K562 (cell line): ENCODE measurements at regions of chr4 and their contacts with region 1.

Region 1: GRCh38 chr4:140326395-140326993 is 47.0 kb upstream of the SCOC start:
- DNase-seq: peak; percentile 19 to 48 (median 34)
- ATAC-seq: peak; percentile 83
- H3K4me3 ChIP-seq: no peak overlapping the region
- H3K27ac ChIP-seq: no peak overlapping the region
- H3K4me1 ChIP-seq: peaks cover 0 to 2% of the 10 kb centered on the region in 2 experiments; a peak in 1 of 5 replicates
- H3K27me3 ChIP-seq: no peaks in the 10 kb centered on the region
- CTCF ChIP-seq: peak; percentile 47 to 54 (median 48); a peak in 5 of 6 replicates
- EP300 ChIP-seq: no peak
- POLR2A ChIP-seq: no peak
- RAD21 ChIP-seq: peak; percentile 27 to 42

Region 2: DNA sequence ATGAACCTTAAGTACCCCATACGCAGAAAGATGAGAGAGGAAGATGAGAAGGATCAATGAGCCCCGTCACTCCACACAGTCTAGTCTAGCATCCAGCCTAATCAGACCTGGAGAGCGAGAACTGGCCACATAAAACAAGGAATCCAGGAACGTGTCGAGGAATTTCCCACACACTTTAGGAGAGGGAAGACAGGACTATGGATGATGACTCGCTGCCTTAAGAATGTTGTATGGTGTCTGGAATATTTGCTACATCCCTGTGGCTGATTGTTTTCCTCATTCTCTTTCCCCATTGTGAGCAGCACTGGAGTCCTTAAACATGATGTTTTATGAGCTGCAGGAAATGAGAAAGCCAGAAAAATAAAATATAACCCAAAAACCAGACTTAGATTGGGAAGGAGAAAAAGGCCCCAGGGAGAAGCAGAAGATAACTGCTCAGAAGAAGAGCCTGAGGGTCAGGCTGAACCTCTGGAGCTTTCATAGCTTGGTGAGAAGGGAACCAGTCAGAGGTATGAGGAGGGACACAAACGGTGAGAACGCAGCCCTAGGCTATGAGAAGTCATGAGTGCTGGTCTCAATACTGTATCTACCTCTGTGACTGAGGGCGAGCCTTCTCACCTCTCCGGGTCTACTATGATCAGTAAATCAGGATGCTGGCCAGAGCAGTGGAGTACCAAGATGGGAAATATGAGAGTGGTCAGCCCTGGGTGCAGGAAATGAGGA is 1450.4 kb before region 1 on chr4:
- CTCF ChIA-PET with region 1: no interaction called
- POLR2A ChIA-PET with region 1: no interaction called
- in situ Hi-C with region 1: no loop called
- intact Hi-C with region 1: no loop called
- DNase-seq: no peak
- ATAC-seq: no peak
- H3K4me3 ChIP-seq: no peak overlapping the region
- H3K27ac ChIP-seq: no peak overlapping the region
- H3K4me1 ChIP-seq: no peaks in the 10 kb centered on the region; a peak in 2 of 5 replicates
- H3K27me3 ChIP-seq: peaks cover 27 to 32% of the 10 kb centered on the region in 2 experiments
- CTCF ChIP-seq: no peak
- EP300 ChIP-seq: no peak
- POLR2A ChIP-seq: no peak
- RAD21 ChIP-seq: no peak

Region 3: DNA sequence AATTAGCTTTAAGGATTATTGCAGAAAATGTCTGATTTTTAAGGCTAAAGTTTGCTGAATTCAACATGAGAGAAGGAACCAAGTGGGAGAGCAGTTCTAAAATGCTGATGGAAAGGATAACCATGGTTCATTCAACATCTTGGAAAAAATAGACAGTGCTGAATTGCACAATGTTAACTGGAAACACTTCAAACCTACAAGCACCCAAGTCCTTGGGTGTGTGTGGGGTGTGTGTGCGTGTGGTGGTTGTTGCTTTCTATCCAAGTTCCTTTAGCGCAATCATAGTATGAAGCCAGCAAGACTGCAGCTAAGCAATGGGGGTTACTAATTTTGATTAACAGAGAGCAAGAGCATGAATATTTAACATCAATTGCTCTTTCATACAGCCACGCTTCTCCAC is 17.6 kb after region 1 on chr4:
- CTCF ChIA-PET with region 1: no interaction called
- POLR2A ChIA-PET with region 1: no interaction called
- in situ Hi-C with region 1: no loop called
- intact Hi-C with region 1: loop called (anchors 1 kb)
- DNase-seq: no peak
- ATAC-seq: no peak
- H3K4me3 ChIP-seq: no peak overlapping the region
- H3K27ac ChIP-seq: no peak overlapping the region
- H3K4me1 ChIP-seq: no peaks in the 10 kb centered on the region; a peak in 1 of 5 replicates
- H3K27me3 ChIP-seq: peaks cover 8 to 21% of the 10 kb centered on the region in 2 experiments
- CTCF ChIP-seq: no peak
- EP300 ChIP-seq: no peak
- POLR2A ChIP-seq: no peak
- RAD21 ChIP-seq: no peak

Region 4: DNA sequence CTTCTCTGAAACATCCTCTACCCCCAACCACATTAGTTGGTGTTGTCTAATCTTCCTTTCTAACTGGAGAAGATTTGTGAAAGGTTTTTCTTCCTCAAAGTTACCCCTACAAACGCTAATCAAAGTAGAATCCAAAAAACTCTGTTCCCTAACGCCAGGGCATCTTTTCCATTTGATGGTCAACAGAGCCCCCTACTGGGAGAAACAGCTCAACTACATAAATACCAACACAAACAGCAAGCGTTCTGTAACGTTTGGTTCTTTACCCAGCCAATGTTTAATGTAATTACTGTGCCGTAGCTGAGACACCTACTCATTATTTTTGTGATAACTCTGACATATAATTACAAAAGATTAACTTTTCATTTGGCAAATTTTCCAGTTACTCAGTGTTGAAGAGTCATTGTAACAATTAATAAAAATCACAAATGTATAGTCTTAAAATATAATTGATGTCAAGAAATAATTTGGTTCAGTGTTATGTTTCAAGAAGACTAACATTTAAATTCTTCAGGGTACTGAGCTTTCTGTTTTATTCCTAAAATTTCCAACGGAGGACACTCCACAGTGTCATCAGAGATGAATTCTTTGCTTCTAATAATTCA is 524.6 kb after region 1 on chr4:
- CTCF ChIA-PET with region 1: no interaction called
- POLR2A ChIA-PET with region 1: no interaction called
- in situ Hi-C with region 1: no loop called
- intact Hi-C with region 1: loop called (anchors 1 kb)
- DNase-seq: peak; percentile 53 to 67 (median 60)
- ATAC-seq: peak; percentile 78
- H3K4me3 ChIP-seq: no peak overlapping the region
- H3K27ac ChIP-seq: no peak overlapping the region
- H3K4me1 ChIP-seq: no peaks in the 10 kb centered on the region
- H3K27me3 ChIP-seq: no peaks in the 10 kb centered on the region
- CTCF ChIP-seq: peak; percentile 63 to 80 (median 71); a peak in 5 of 6 replicates
- EP300 ChIP-seq: no peak
- POLR2A ChIP-seq: no peak
- RAD21 ChIP-seq: peak; percentile 71